Common myeloid progenitor, CD34-positive (primary cell): ENCODE measurements at regions of chr19 and their contacts with region 1.

Region 1: GRCh38 chr19:15159251-15159650 is 41.5 kb downstream of the NOTCH3 start:
- DNase-seq: peak in 2 of 3 donors; percentile 50 to 61
- H3K4me3 ChIP-seq: no peak overlapping the region
- H3K27ac ChIP-seq: no peak overlapping the region
- H3K4me1 ChIP-seq: no peaks in the 10 kb centered on the region
- H3K27me3 ChIP-seq: no peaks in the 10 kb centered on the region

Region 2: GRCh38 chr19:15170345-15170744 is 11.1 kb after region 1 on chr19:
- CTCF ChIA-PET with region 1: interaction called, 11 read pairs
- POLR2A ChIA-PET with region 1: no interaction called
- DNase-seq: no peak
- H3K4me3 ChIP-seq: no peak overlapping the region
- H3K27ac ChIP-seq: no peak overlapping the region
- H3K4me1 ChIP-seq: no peaks in the 10 kb centered on the region
- H3K27me3 ChIP-seq: no peaks in the 10 kb centered on the region